ENCODE measurements at regions of chr9 and their contacts with region 1.

Region 1: DNA sequence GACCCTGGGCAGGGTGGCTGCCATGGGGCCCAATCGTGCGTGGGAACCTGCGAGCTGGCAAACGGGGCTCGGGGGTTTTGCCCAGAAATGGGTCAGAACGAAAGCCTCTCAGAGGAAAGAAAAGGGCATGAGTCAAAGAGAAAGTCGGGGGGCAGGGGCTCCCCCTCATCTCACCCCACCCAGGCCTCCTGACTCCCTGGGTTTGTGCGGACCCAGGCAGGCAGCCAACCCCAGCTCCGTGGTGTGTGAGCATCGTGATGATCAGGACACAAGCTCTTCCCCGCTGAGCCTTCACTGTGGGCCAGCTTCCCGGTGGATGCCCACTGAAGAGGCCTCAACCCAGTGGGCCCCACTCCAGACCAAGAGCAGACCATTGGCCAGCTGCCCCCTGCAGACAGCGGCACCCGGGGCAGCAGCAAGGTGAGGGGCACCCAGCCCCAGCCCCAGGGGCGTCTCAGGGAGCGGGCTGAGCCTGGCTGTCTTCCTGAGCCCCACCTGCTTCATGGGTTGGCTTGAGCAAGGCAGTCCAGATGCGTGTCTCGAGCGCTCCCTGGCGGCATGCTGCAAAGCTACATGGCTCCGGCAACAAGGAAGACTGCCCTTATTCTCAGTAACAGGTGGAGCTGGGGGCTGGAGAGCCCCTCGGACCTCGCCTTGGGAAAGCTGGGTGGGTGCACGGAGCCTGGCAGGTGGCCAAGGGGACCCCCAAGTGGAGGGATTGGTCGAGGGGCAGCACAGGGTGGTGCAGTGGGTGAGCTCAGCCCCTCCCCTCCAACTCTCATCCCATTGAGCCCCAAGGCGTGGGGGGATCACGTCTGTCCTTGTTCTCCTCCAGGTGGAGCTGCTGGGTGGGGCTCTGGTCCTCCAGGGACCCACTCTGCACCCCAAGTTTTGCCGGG is 3.2 kb upstream of the FUT7 start:
- DNase-seq: peak; percentile 91
- ATAC-seq: peak; percentile 89
- H3K4me3 Mint-ChIP-seq: peak overlapping the region; percentile 47
- H3K27ac Mint-ChIP-seq: peak overlapping the region; percentile 85
- H3K4me1 Mint-ChIP-seq: peaks cover 34% of the 10 kb centered on the region
- H3K27me3 Mint-ChIP-seq: no peaks in the 10 kb centered on the region
- CTCF ChIP-seq: peak; percentile 86

Region 2: DNA sequence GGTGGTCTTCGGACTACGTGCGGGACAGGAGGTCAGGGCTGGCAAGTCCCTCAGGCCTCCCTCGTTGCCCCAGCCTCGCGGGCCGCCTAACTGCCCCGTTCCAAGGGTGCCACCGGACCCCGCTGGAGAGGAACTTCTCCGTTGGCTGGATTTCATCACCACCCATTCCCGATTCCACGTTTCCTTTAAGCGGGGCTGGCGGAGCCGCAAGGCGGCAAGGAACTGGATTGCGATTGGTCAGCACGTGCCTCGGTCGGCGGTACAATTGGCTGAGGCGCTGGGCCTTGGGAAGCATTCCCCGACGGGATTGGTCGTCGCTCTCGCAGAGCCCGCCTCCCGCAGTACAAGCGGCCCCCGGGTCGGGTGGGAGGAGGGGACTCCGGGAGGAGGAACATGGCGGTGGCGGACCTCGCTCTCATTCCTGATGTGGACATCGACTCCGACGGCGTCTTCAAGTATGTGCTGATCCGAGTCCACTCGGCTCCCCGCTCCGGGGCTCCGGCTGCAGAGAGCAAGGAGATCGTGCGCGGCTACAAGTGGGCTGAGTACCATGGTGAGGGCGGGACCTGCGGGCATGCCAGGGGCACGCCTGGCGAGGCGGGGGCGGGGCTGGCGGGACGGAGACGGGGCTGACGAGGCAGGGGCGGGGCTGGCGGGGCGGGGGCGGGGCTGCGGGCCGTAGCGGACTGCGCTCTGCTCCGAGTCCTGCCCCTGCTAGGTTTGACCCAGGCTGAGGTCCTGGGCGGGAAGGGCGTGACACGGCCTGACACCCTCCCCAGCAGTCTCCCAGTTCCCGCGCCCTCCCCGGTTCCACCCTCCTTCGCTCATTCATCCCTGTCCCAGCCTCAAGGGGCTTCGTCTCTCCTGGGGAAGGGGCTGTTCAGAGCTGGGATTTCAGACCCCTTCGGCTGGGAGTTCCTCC is 185.8 kb before region 1 on chr9 and contains the start of gene PHPT1:
- CTCF ChIA-PET with region 1: interaction called, 15 read pairs
- POLR2A ChIA-PET with region 1: no interaction called
- intact Hi-C with region 1: no loop called
- DNase-seq: peak; percentile 98
- ATAC-seq: peak; percentile 92
- H3K4me3 Mint-ChIP-seq: peak within 1 kb of the TSS; percentile 92
- H3K27ac Mint-ChIP-seq: peak within 1 kb of the TSS; percentile 93
- H3K4me1 Mint-ChIP-seq: peaks cover 7% of the 10 kb centered on the region
- H3K27me3 Mint-ChIP-seq: peaks cover 16% of the 10 kb centered on the region
- CTCF ChIP-seq: no peak
- total RNA-seq, gene PHPT1: 123 to 124 TPM

Region 3: GRCh38 chr9:136949817-136950655 is 85.1 kb before region 1 on chr9:
- CTCF ChIA-PET with region 1: interaction called, 82 read pairs
- POLR2A ChIA-PET with region 1: interaction called, 7 read pairs
- intact Hi-C with region 1: no loop called
- DNase-seq: peak; percentile 99
- ATAC-seq: peak; percentile 97
- H3K4me3 Mint-ChIP-seq: peak overlapping the region; percentile 82
- H3K27ac Mint-ChIP-seq: peak overlapping the region; percentile 83
- H3K4me1 Mint-ChIP-seq: peaks cover 6% of the 10 kb centered on the region
- H3K27me3 Mint-ChIP-seq: no peaks in the 10 kb centered on the region
- CTCF ChIP-seq: peak; percentile 37

Region 4: GRCh38 chr9:137000177-137000883 is 34.8 kb before region 1 on chr9:
- CTCF ChIA-PET with region 1: interaction called, 31 read pairs
- POLR2A ChIA-PET with region 1: no interaction called
- intact Hi-C with region 1: no loop called
- DNase-seq: peak; percentile 84
- ATAC-seq: peak; percentile 81
- H3K4me3 Mint-ChIP-seq: no peak overlapping the region
- H3K27ac Mint-ChIP-seq: peak overlapping the region; percentile 25
- H3K4me1 Mint-ChIP-seq: peaks cover 37% of the 10 kb centered on the region
- H3K27me3 Mint-ChIP-seq: peaks cover 5% of the 10 kb centered on the region
- CTCF ChIP-seq: no peak

Region 5: GRCh38 chr9:137046098-137046787 is 11.1 kb after region 1 on chr9 and contains the start of gene NPDC1:
- CTCF ChIA-PET with region 1: interaction called, 37 read pairs
- POLR2A ChIA-PET with region 1: interaction called, 6 read pairs
- intact Hi-C with region 1: no loop called
- DNase-seq: peak; percentile 92
- ATAC-seq: peak; percentile 84
- H3K4me3 Mint-ChIP-seq: peak within 1 kb of the TSS; percentile 63
- H3K27ac Mint-ChIP-seq: no peak within 1 kb of the TSS
- H3K4me1 Mint-ChIP-seq: peaks cover 10% of the 10 kb centered on the region
- H3K27me3 Mint-ChIP-seq: peaks cover 42% of the 10 kb centered on the region
- CTCF ChIP-seq: peak; percentile 83
- total RNA-seq, gene NPDC1: 18.2 to 21.2 TPM

Region 6: DNA sequence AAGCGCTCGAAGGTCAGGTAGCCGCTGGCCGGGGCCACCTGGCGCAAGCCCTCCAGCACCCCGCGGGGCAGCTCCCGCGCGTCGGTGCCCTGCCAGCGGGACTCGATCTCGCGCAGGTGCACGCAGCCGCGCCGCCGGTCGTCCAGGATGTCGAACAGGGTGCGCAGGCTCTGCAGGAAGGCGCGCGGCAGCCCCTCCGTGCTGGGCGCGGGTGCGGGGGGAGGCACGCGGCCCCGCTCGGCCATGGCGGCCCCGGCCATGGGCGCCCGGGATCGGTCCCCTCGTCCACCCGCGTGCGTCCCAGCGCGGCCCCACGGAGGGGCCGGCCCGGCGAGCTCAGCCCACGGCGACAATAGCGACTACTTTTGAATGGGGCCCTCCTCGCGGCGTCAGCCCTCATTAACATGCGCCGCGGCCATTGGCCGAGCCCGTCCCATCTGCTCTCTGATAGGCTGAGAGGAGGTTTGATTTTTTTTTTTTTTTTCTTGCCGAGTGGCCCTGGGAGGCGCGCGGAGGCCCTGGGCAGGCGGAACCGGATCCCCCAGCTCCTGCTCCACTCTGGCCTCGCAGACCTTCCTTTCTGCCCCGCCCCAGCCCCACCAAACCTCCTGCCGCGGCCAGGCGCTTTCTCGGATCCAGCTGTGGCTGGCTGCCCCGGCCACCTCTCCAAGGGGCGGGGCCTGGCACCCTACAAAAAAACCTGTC is 35.2 kb after region 1 on chr9 and contains the start of gene SAPCD2:
- CTCF ChIA-PET with region 1: interaction called, 109 read pairs
- POLR2A ChIA-PET with region 1: interaction called, 4 read pairs
- intact Hi-C with region 1: no loop called
- DNase-seq: peak; percentile 92
- ATAC-seq: peak; percentile 87
- H3K4me3 Mint-ChIP-seq: peak within 1 kb of the TSS; percentile 68
- H3K27ac Mint-ChIP-seq: peak within 1 kb of the TSS; percentile 62
- H3K4me1 Mint-ChIP-seq: peaks cover 7% of the 10 kb centered on the region
- H3K27me3 Mint-ChIP-seq: peaks cover 1% of the 10 kb centered on the region
- CTCF ChIP-seq: no peak
- total RNA-seq, gene SAPCD2: 13.5 to 13.7 TPM

Region 7: DNA sequence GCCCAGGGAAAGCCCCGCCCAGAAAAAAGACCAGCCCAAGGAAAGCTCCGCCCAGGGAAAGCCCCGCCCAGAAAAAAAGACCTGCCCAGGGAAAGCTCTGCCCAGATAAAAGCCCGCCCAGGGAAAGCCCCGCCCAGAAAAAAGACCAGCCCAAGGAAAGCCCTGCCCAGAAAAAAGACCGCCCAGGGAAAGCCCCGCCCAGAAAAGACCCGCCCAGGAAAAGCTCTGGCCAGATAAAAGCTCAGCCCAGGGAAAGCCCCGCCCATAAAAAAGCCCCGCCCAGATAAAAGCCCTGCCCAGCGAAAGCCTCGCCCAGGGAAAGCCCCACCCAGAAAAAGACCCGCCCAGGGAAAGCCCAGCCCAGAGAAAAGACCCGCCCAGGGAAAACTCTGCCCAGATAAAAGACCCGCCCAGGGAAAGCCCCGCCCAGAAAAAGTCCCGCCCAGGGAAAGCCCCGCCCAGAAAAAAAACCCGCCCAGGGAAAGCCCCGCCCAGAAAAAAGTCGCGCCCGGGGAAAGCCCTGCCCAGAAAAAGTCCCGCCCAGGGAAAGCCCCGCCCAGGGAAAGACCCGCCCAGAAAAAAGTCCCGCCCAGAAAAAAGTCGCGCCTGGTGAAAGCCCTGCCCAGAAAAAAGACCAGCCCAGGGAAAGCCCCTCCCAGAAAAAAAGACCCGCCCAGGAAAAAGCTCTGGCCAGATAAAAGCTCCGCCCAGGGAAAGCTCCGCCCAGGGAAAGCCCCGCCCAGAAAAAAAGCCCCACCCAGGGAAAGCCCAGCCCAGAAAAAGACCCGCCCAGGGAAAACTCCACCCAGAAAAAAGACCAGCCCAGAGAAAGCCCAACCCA is 115.7 kb after region 1 on chr9:
- CTCF ChIA-PET with region 1: no interaction called
- POLR2A ChIA-PET with region 1: no interaction called
- intact Hi-C with region 1: no loop called
- DNase-seq: peak; percentile 91
- ATAC-seq: peak; percentile 71
- H3K4me3 Mint-ChIP-seq: no peak overlapping the region
- H3K27ac Mint-ChIP-seq: peak overlapping the region; percentile 55
- H3K4me1 Mint-ChIP-seq: peaks cover 6% of the 10 kb centered on the region
- H3K27me3 Mint-ChIP-seq: peaks cover 9% of the 10 kb centered on the region
- CTCF ChIP-seq: no peak

Region 8: DNA sequence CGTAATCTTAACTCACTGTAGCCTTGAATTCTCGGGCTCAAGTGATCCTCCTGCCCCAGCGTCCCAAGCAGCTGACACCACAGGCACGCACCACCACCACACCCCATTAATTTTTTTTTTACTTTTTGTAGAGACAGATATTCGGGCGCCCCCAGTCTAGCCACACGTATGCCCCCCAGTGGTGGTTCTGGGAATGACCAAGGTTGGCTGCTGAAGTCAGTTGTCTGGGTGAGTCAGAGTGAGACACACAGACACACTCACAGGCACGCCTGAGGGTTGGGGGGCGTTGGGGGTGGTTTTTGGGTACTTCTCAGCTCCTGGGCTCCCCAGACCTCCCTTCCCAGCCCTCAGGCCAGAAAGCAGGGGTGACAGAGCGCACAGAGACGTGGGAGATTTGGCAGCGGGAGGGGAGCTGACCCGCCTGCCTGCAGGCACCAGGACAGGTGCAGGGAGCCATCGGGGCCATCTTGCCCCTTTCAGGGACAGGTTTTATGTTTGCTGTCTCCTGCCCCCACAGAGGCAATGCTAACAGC is 410.2 kb after region 1 on chr9:
- CTCF ChIA-PET with region 1: no interaction called
- POLR2A ChIA-PET with region 1: no interaction called
- intact Hi-C with region 1: no loop called
- DNase-seq: peak; percentile 94
- ATAC-seq: peak; percentile 96
- H3K4me3 Mint-ChIP-seq: no peak overlapping the region
- H3K27ac Mint-ChIP-seq: no peak overlapping the region
- H3K4me1 Mint-ChIP-seq: peaks cover 16% of the 10 kb centered on the region
- H3K27me3 Mint-ChIP-seq: peaks cover 18% of the 10 kb centered on the region
- CTCF ChIP-seq: peak; percentile 80

Measured in activated CD8-positive, alpha-beta T cell treated with anti-CD3 and anti-CD28 coated beads for 36 hours (primary cell).